Activated T-helper 1 cell treated with anti-CD3 and anti-CD28 coated beads, Interleukin-12 subunit alpha, Interleukin-12 subunit beta, Interleukin-2, Interleukin-4 antibody, amounts not matched to agents 30 ng/mL and 10 ng/mL and 1 ng/mL, durations not matched to agents 14 hours and 24 hours and 36 hours (primary cell): ENCODE measurements at regions of chr17 and their contacts with region 1.

Region 1: DNA sequence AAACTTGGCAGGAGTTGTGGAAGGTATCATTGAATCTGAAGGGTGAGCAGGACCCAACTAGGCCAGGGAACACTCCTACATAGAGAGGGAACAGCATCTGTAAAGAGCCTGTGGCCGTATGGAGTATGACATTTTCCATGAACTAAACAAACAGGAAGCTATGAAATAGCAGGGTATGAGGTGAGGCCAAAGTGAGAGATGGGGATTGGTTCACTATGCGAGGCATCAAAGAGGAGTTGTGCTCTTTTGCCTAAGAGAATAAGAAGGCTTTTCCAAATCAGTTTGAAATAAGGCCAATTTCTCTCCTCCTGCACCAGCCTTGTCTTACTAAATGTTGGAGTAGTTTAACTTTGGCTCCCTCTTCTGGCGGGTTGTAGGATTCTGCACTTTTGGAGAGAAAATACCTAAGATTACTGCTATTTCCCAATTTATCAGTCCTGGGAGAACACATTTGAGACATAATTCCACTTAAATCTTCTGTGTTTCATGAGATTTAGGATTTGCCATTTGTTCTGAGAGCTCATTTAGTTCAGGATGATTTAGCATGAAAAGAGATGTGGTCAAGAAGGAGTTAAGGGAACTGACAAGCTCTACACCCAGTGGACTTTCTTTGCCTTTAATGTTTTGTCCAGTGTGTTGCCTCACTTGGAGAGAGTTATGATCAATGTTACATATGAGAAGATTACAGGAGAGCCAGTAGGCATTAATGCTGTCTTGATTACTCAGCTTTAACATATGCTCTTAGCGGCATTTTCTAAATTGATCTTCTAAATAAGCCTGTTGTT is 55.4 kb downstream of the TNRC6C start:
- DNase-seq: peak; percentile 21
- H3K4me3 Mint-ChIP-seq: no peak overlapping the region
- H3K27ac Mint-ChIP-seq: no peak overlapping the region
- H3K4me1 Mint-ChIP-seq: peaks cover 22% of the 10 kb centered on the region
- H3K27me3 Mint-ChIP-seq: no peaks in the 10 kb centered on the region

Region 2: GRCh38 chr17:77542551-77543490 is 471.1 kb before region 1 on chr17:
- intact Hi-C with region 1: loop called (anchors 1 kb)
- DNase-seq: peak; percentile 41
- H3K4me3 Mint-ChIP-seq: no peak overlapping the region
- H3K27ac Mint-ChIP-seq: no peak overlapping the region
- H3K4me1 Mint-ChIP-seq: no peaks in the 10 kb centered on the region
- H3K27me3 Mint-ChIP-seq: peaks cover 15% of the 10 kb centered on the region

Region 3: DNA sequence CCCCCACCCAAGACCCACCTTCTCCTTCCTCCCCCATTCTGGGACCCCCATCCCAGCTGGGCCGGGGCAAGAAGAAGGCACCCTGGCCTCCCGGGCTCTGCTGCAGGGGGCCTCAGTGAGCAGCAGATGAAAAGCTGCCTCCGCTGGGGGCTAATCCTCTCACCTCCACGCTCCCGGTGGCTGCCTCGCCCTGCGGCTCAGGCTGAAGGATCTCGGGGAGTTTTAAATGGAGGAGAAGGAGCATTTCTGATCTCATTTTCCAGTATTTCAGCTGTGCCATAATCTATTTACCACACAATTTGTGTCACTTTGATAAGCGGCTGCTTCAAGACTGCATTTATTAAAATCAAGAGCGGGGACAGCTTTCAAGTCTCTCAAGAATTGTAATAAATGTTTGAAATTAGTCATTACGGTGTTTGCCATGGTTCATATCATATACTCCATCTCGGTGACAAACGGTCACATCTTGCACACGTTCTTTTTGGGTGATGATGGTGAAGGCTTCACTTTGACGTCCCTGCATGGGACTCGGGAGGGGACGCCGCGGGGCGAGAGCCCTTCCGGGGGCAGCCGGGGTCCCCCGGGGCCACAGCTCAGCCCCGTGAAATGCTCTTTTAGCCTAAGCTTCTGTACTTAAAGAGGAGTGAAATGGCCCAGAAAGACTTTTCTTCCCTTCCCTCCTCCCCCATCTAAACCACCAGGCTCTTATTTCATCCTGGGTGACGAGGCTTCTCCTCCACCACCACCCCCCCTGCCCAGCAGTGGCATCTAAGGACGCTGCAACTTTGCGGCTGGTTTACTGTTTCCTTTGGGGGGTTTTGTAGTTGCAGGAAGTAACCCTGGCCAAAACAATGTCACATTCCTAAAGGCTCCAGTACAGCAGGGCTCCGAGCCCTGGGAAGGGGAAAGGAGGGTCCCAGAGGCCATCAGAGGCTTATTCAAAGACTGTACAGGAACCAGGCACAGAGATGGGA is 368.5 kb before region 1 on chr17:
- intact Hi-C with region 1: loop called (anchors 5 kb)
- DNase-seq: peak; percentile 19
- H3K4me3 Mint-ChIP-seq: peak overlapping the region; percentile 40
- H3K27ac Mint-ChIP-seq: peak overlapping the region; percentile 86
- H3K4me1 Mint-ChIP-seq: peaks cover 24% of the 10 kb centered on the region
- H3K27me3 Mint-ChIP-seq: peaks cover 12% of the 10 kb centered on the region

Region 4: DNA sequence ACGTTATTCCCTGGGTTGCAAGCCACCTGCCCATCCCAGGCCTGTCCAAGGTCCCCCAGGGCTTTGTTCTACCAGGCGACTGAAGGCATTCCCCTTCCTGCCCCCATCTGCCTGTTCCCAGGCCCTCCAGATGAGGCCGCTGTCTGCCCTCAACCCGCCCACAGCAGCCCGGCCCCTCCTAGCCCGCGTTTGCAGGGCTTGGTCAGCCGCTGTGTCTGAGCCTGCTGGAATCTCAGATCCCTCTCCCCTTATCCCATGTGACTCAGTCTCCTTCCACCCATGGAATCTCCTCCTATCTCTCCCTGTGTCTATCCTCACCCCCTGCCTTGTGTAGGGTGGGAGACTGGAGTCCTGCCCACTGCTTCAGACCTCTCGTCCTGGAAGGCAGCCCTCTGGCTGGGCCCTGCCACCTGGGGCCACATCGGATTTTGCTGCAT is 241.4 kb before region 1 on chr17:
- intact Hi-C with region 1: loop called (anchors 1 kb)
- DNase-seq: peak; percentile 45
- H3K4me3 Mint-ChIP-seq: no peak overlapping the region
- H3K27ac Mint-ChIP-seq: no peak overlapping the region
- H3K4me1 Mint-ChIP-seq: no peaks in the 10 kb centered on the region
- H3K27me3 Mint-ChIP-seq: peaks cover 30% of the 10 kb centered on the region

Region 5: GRCh38 chr17:77842528-77843147 is 171.2 kb before region 1 on chr17:
- intact Hi-C with region 1: loop called (anchors 5 kb)
- DNase-seq: no peak
- H3K4me3 Mint-ChIP-seq: peak overlapping the region; percentile 5
- H3K27ac Mint-ChIP-seq: no peak overlapping the region
- H3K4me1 Mint-ChIP-seq: peaks cover 43% of the 10 kb centered on the region
- H3K27me3 Mint-ChIP-seq: peaks cover 21% of the 10 kb centered on the region

Region 6: GRCh38 chr17:77887464-77888241 is 126.2 kb before region 1 on chr17:
- intact Hi-C with region 1: loop called (anchors 5 kb)
- DNase-seq: peak; percentile 38
- H3K4me3 Mint-ChIP-seq: peak overlapping the region; percentile 74
- H3K27ac Mint-ChIP-seq: peak overlapping the region; percentile 66
- H3K4me1 Mint-ChIP-seq: peaks cover 52% of the 10 kb centered on the region
- H3K27me3 Mint-ChIP-seq: peaks cover 58% of the 10 kb centered on the region

Region 7: DNA sequence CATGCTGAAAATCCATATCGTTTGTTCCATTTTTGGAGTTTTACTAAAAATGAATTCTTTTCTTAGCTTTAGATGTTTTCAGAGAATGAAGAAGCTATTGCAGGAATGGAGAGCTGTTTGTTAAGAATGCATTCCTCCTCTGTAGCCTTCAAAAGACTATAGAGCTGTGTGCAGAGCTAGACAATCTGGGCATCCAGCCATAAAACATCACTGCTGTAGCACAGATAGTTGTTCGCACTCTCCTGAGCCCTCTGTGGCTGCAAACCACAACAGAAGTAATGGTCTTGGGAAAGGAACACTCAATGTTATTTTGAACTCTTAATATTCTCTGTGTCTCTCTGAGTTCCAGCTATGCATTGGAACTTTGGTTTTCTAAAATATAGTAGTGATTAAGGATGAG is 50.4 kb before region 1 on chr17:
- intact Hi-C with region 1: loop called (anchors 5 kb)
- DNase-seq: no peak
- H3K4me3 Mint-ChIP-seq: no peak overlapping the region
- H3K27ac Mint-ChIP-seq: no peak overlapping the region
- H3K4me1 Mint-ChIP-seq: peaks cover 49% of the 10 kb centered on the region
- H3K27me3 Mint-ChIP-seq: no peaks in the 10 kb centered on the region

Region 8: DNA sequence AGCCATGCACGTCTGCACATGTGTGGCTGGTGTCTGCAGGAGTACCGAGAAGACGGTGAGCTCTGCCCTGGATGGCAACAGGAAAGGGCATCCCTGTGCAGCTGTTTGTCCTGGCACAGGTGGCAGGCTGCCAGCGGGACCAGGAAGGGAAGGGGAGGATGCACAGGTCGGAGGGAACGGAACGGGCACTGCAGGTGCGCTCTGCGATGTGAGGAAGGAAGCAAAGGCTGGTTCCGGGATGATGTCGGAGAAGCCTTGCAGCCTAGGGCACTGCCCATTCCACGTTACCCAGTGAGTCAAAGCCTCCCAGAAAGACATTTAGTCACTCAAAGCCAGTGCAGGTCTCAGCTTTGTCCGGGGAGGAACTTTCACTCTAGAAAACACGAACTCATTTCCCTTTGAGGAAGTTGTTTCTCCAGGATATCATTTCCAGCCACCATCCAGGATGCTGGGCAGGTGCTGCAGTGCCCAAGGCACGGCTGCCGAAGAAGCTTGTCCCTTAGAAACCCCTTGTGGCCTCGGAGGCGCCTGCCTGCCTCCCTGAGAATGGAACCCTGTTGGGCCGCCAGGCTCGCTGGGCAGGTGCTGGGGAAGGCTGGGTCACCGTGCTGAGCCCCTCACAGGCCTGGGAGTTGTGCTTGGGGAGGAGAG is 213.0 kb after region 1 on chr17:
- intact Hi-C with region 1: no loop called
- DNase-seq: no peak
- H3K4me3 Mint-ChIP-seq: no peak overlapping the region
- H3K27ac Mint-ChIP-seq: no peak overlapping the region
- H3K4me1 Mint-ChIP-seq: peaks cover 9% of the 10 kb centered on the region
- H3K27me3 Mint-ChIP-seq: peaks cover 25% of the 10 kb centered on the region

Region 9: GRCh38 chr17:78998311-78999055 is 984.6 kb after region 1 on chr17:
- intact Hi-C with region 1: no loop called
- DNase-seq: no peak
- H3K4me3 Mint-ChIP-seq: no peak overlapping the region
- H3K27ac Mint-ChIP-seq: no peak overlapping the region
- H3K4me1 Mint-ChIP-seq: peaks cover 2% of the 10 kb centered on the region
- H3K27me3 Mint-ChIP-seq: no peaks in the 10 kb centered on the region